Ascending aorta (tissue), 2 donors: ENCODE measurements at regions of chr16 and their contacts with region 1.

Region 1: DNA sequence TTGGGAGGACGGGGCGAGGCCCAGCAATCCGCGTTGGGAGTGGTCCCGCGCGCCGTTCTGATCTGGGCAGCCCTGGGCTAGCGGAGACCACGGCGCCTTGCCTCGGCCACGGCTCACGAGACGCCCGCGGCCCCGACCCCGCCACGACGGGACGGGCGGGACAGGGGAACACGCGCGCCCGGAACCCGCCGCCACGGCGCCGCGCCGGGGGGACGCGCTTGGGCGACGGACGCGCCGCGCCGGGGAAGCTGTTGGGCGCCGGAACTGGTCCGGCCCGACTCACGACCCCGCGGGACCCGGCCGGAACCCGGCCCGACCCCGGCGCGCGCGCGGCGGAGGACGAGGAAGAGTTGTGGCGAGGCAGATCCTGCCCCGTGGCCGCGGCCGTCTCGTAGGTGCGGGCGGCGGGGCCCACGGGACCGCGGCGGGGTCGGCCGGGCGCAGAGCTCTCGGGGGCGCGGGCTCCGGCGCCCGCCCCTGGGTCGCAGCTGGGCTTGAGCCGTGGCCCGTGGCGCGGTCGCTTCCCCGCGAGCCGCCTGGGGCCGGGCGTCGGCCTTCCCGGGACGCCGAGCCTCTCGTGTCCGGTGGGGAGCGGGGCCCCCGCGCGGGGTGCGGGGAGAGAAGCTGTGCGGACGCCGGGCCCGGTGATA is at the start of gene ACSF3:
- DNase-seq: peak in 1 of 2 donors; percentile 75
- H3K4me3 ChIP-seq: peak within 1 kb of the TSS; percentile 93
- H3K27ac ChIP-seq: peak within 1 kb of the TSS; percentile 32 to 70
- H3K4me1 ChIP-seq: peaks cover 0 to 21% of the 10 kb centered on the region in 2 donors
- H3K27me3 ChIP-seq: no peaks in the 10 kb centered on the region
- CTCF ChIP-seq: peak in 1 of 3 experiments; percentile 4
- total RNA-seq, gene ACSF3: 5.2 TPM

Region 2: GRCh38 chr16:88784074-88784855 is 309.5 kb before region 1 on chr16:
- intact Hi-C with region 1: no loop called
- DNase-seq: peak; percentile 48 to 89
- H3K4me3 ChIP-seq: peak overlapping the region; percentile 93 to 95
- H3K27ac ChIP-seq: peak overlapping the region; percentile 90 to 93
- H3K4me1 ChIP-seq: peaks cover 15 to 31% of the 10 kb centered on the region in 2 donors
- H3K27me3 ChIP-seq: no peaks in the 10 kb centered on the region
- CTCF ChIP-seq: peak; percentile 31 to 67 (median 48)

Region 3: DNA sequence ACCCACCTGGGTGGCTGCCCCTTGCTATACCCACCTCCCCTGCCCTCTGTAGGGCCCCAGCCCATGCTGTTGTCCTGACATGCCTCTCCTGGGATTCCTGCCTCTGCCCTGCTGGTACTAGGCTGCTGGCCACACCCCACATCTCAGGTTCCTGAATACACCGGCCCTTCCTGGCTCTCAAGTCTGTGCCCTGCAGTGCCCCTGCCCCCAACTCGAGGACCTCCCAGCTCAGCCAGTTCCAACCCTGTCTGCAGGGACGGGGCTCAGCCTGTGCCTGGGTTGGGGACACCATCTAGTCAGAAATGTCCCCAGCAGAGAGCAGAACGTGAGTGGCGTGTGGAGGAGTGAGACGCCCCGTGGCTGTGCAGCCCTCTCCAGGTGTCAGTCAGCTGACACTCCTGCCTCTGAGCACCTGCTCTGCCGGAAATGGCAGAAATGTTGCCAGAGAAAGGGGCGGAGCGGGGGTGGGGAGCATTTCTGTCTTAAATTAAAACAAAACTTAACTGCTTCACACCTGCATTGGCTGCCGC is 28.7 kb after region 1 on chr16:
- intact Hi-C with region 1: no loop called
- DNase-seq: no peak
- H3K4me3 ChIP-seq: no peak overlapping the region
- H3K27ac ChIP-seq: no peak overlapping the region
- H3K4me1 ChIP-seq: no peaks in the 10 kb centered on the region
- H3K27me3 ChIP-seq: no peaks in the 10 kb centered on the region
- CTCF ChIP-seq: no peak

Region 4: DNA sequence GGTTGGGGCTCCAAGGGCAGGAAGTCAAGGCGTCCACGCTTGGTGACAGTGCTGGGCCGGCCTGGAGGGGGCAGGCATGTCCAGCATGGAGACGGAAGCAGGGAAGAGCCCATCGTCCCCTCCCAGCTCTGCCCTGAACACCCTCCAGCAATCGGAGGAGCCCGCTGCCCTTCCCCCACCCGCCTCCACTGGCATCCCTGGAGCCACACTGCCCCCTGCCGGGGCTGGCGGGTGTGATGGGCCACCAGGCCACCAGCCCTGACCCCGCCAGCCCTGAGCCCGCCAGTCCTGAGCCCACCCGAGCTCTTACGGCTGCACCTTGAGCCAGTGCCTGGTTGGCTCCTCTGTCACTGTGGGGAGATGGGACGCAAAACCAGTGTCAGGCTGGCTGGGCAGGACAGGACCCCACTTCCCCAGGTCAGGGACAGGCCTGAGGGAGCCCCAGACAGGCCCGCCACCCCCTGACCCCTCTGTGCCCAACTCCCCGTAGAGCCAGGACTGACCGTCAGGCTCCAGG is 73.8 kb after region 1 on chr16:
- intact Hi-C with region 1: loop called (anchors 10 kb)
- DNase-seq: peak in 1 of 2 donors; percentile 84
- H3K4me3 ChIP-seq: no peak overlapping the region
- H3K27ac ChIP-seq: no peak overlapping the region
- H3K4me1 ChIP-seq: peaks cover 6 to 8% of the 10 kb centered on the region in 2 donors
- H3K27me3 ChIP-seq: peaks cover 18% of the 10 kb centered on the region
- CTCF ChIP-seq: peak; percentile 44 to 65 (median 62)